H1 (cell line): ENCODE measurements at regions of chr1 and their contacts with region 1.

Region 1: GRCh38 chr1:201709564-201710295 is 119.2 kb upstream of the IPO9 start:
- DNase-seq: peak; percentile 50 to 92
- H3K4me3 ChIP-seq: no peak overlapping the region
- H3K27ac ChIP-seq: no peak overlapping the region
- H3K4me1 ChIP-seq: peaks cover 0 to 3% (median 2%) of the 10 kb centered on the region in 4 experiments; a peak in 4 of 7 replicates
- H3K27me3 ChIP-seq: no peaks in the 10 kb centered on the region
- CTCF ChIP-seq: peak; percentile 95 to 97 (median 97)
- EP300 ChIP-seq: no peak
- POLR2A ChIP-seq: no peak
- RAD21 ChIP-seq: peak; percentile 90 to 94

Region 2: DNA sequence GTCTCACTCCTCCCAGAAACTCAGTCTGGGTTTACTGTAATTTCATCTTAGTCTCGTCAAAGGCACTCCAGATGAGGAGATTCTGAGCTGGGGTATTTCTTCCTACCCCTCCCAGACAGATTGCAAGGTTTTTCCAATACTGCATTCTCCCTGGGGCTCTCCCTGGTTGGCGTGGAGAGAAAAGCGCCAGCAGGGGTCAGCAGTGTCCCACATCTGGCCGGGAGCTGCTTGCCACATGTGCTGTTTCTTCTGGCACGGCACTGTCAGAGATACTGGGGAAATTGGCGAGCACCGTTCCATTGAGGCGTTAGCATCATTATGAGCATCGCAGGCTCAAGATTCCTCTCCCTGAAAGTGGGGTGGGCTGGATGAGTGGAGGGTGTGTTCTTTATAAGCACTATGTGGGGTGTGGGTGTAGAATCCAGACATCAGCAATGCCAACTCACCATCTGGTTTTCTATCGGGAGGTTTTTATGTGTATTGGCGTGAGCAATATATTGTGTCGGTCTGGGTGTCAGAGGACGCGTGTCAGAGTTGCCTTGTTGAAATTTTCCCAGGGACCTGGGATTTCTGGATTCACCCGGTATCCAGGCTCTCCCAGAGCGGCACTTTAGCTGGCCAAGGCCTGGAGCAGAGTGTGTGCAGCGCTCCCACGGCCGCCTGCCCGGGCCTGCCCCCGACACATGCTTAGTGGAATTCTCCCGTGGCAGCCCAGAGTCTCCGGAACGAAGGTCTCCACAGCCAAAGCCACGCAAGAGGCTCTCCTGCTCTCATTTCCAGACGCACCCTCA is 178.8 kb before region 1 on chr1:
- CTCF ChIA-PET with region 1: interaction called, 41 read pairs
- POLR2A ChIA-PET with region 1: no interaction called
- DNase-seq: peak in 1 of 2 experiments; percentile 90
- H3K4me3 ChIP-seq: no peak overlapping the region
- H3K27ac ChIP-seq: no peak overlapping the region
- H3K4me1 ChIP-seq: peaks cover 0 to 5% (median 3%) of the 10 kb centered on the region in 4 experiments; a peak in 3 of 7 replicates
- H3K27me3 ChIP-seq: no peaks in the 10 kb centered on the region
- CTCF ChIP-seq: peak; percentile 88 to 92 (median 91)
- EP300 ChIP-seq: no peak
- POLR2A ChIP-seq: no peak
- RAD21 ChIP-seq: peak; percentile 96

Region 3: DNA sequence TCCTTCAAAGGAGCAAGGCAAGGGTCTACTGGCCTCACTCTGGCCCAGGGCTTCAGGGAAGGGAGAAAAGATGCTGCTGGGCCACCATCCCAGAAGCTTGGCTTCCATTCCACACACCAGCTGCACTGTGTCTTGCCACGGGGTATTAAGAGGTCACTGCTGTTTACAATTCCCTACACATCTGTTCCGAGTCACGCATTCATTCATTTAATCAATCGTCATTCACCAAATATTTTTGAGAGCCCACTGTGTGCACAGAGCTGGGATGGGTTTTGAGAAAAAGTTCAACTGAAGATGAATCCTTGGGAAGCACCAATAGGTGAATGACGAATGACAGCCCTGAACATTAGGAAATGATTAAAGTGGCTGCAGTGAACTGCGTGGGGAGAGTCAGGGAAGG is 69.1 kb before region 1 on chr1:
- CTCF ChIA-PET with region 1: interaction called, 10 read pairs
- POLR2A ChIA-PET with region 1: no interaction called
- DNase-seq: no peak
- H3K4me3 ChIP-seq: no peak overlapping the region
- H3K27ac ChIP-seq: no peak overlapping the region
- H3K4me1 ChIP-seq: peaks cover 3 to 11% (median 4%) of the 10 kb centered on the region in 4 experiments; a peak in 6 of 7 replicates
- H3K27me3 ChIP-seq: no peaks in the 10 kb centered on the region; a peak in 1 of 7 replicates
- CTCF ChIP-seq: no peak
- EP300 ChIP-seq: no peak
- POLR2A ChIP-seq: no peak
- RAD21 ChIP-seq: no peak

Region 4: DNA sequence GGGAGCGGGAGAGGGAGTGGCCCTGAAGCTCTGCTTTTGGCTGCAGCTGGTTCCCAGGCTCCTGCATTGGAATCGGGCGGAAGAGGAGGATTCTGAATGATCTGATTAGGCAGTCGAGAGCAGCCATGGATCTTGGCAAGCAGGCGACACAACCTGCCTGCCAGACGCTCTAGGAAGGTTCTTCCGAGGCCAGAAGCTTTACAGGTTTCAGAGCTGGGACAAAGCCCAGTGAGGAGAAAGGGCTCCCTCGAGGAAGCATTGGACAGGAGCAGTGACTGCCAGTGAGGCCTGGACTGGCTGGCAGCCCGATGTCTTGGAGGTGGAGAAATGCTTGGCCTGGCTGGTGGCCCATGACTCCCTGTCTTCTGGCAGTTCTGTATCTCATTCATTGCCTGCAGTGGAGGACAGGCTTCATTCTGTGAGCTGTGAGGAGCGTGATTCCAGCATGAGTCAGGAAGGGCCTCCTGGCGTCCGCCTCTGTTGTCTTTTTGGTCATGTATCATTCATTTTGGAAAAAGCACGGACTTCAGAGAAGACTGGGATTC is 13.4 kb before region 1 on chr1:
- CTCF ChIA-PET with region 1: interaction called, 38 read pairs
- POLR2A ChIA-PET with region 1: no interaction called
- DNase-seq: no peak
- H3K4me3 ChIP-seq: no peak overlapping the region
- H3K27ac ChIP-seq: no peak overlapping the region
- H3K4me1 ChIP-seq: peaks cover 16 to 24% (median 19%) of the 10 kb centered on the region in 4 experiments
- H3K27me3 ChIP-seq: no peaks in the 10 kb centered on the region
- CTCF ChIP-seq: no peak
- EP300 ChIP-seq: no peak
- POLR2A ChIP-seq: no peak
- RAD21 ChIP-seq: no peak

Region 5: DNA sequence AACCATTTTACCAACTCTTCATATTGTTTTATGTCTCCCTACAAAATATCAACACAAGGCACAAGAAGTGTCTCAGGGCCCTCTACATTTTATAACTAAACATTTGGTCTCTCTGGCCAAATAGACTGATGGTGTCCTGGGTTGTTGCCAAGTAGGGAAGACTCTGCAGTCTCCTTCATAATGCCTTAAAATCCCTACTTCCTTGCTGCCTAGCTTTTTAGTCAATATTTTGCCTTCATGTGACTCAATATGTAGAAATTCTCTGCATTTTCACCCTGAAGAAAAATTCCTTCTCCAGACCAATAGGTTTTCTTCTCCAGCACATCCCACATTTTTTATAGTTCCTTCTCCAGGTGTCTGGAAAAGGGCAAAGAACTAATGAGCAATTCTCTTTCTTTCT is 46.7 kb after region 1 on chr1:
- CTCF ChIA-PET with region 1: interaction called, 21 read pairs
- POLR2A ChIA-PET with region 1: no interaction called
- DNase-seq: no peak
- H3K4me3 ChIP-seq: no peak overlapping the region
- H3K27ac ChIP-seq: no peak overlapping the region
- H3K4me1 ChIP-seq: peaks cover 9 to 31% (median 22%) of the 10 kb centered on the region in 4 experiments
- H3K27me3 ChIP-seq: no peaks in the 10 kb centered on the region
- CTCF ChIP-seq: no peak
- EP300 ChIP-seq: no peak
- POLR2A ChIP-seq: no peak
- RAD21 ChIP-seq: no peak

Region 6: DNA sequence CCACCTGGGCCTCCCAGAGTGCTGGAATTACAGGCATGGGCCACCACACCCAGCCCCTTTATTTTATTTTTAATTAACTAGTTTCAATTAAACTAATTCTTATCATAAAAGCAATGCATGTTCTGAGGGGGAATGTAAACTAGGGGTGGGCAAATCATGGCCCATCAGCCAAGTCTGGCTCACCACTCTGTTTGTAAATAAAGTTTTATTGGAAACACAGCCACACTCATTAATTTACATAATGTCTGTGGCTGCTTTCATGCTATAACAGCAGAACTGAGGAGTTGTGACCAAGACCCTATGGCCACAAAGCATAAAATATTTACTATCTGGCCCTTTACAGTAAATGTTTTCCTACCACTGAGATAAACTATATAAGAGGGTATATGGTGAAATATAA is 90.5 kb after region 1 on chr1:
- CTCF ChIA-PET with region 1: interaction called, 823 read pairs
- POLR2A ChIA-PET with region 1: no interaction called
- DNase-seq: no peak
- H3K4me3 ChIP-seq: no peak overlapping the region
- H3K27ac ChIP-seq: no peak overlapping the region
- H3K4me1 ChIP-seq: no peaks in the 10 kb centered on the region
- H3K27me3 ChIP-seq: no peaks in the 10 kb centered on the region
- CTCF ChIP-seq: no peak
- EP300 ChIP-seq: no peak
- POLR2A ChIP-seq: no peak
- RAD21 ChIP-seq: no peak